CD4-positive, alpha-beta memory T cell (primary cell): ENCODE measurements at regions of chr3 and their contacts with region 1.

Region 1: GRCh38 chr3:132071043-132071442 is 36.2 kb upstream of the CPNE4 start:
- DNase-seq: no peak
- H3K4me3 ChIP-seq: no peak overlapping the region
- H3K4me3 Mint-ChIP-seq: no peak overlapping the region
- H3K27ac ChIP-seq: no peak overlapping the region
- H3K27ac Mint-ChIP-seq: no peak overlapping the region
- H3K4me1 ChIP-seq: no peaks in the 10 kb centered on the region
- H3K4me1 Mint-ChIP-seq: no peaks in the 10 kb centered on the region
- H3K27me3 ChIP-seq: no peaks in the 10 kb centered on the region
- H3K27me3 Mint-ChIP-seq: peaks cover 0 to 1% of the 10 kb centered on the region in 2 donors

Region 2: GRCh38 chr3:132006605-132007204 is 64.3 kb before region 1 on chr3:
- CTCF ChIA-PET with region 1: no interaction called
- POLR2A ChIA-PET with region 1: no interaction called
- intact Hi-C with region 1: loop called (anchors 2 kb)
- DNase-seq: no peak
- H3K4me3 ChIP-seq: no peak overlapping the region
- H3K4me3 Mint-ChIP-seq: no peak overlapping the region
- H3K27ac ChIP-seq: no peak overlapping the region
- H3K27ac Mint-ChIP-seq: no peak overlapping the region
- H3K4me1 ChIP-seq: no peaks in the 10 kb centered on the region
- H3K4me1 Mint-ChIP-seq: no peaks in the 10 kb centered on the region
- H3K27me3 ChIP-seq: no peaks in the 10 kb centered on the region
- H3K27me3 Mint-ChIP-seq: peaks cover 2 to 4% of the 10 kb centered on the region in 2 donors